PC-3 (cell line): ENCODE measurements at regions of chr10 and their contacts with region 1.

Region 1: GRCh38 chr10:11270135-11270857 is 252.6 kb downstream of the CELF2 start:
- DNase-seq: peak; percentile 44
- ATAC-seq: peak; percentile 90
- H3K4me3 ChIP-seq: no peak overlapping the region
- H3K27ac ChIP-seq: no peak overlapping the region
- H3K4me1 ChIP-seq: no peaks in the 10 kb centered on the region
- H3K27me3 ChIP-seq: peaks cover 51% of the 10 kb centered on the region
- CTCF ChIP-seq: peak; percentile 72

Region 2: GRCh38 chr10:9331583-9332008 is 1938.7 kb before region 1 on chr10:
- CTCF ChIA-PET with region 1: no interaction called
- POLR2A ChIA-PET with region 1: no interaction called
- intact Hi-C with region 1: loop called (anchors 2 kb)
- DNase-seq: peak; percentile 32
- ATAC-seq: no peak
- H3K4me3 ChIP-seq: no peak overlapping the region
- H3K27ac ChIP-seq: no peak overlapping the region
- H3K4me1 ChIP-seq: no peaks in the 10 kb centered on the region
- H3K27me3 ChIP-seq: no peaks in the 10 kb centered on the region
- CTCF ChIP-seq: peak; percentile 63